ENCODE measurements at regions of chr4 and their contacts with region 1.

Region 1: GRCh38 chr4:157804986-157805385 is 367.8 kb downstream of the GASK1B start:
- DNase-seq: peak; percentile 23
- ATAC-seq: peak; percentile 64
- H3K4me3 ChIP-seq: no peak overlapping the region
- H3K27ac ChIP-seq: no peak overlapping the region
- H3K4me1 ChIP-seq: no peaks in the 10 kb centered on the region
- H3K27me3 ChIP-seq: no peaks in the 10 kb centered on the region
- CTCF ChIP-seq: peak; percentile 43

Region 2: DNA sequence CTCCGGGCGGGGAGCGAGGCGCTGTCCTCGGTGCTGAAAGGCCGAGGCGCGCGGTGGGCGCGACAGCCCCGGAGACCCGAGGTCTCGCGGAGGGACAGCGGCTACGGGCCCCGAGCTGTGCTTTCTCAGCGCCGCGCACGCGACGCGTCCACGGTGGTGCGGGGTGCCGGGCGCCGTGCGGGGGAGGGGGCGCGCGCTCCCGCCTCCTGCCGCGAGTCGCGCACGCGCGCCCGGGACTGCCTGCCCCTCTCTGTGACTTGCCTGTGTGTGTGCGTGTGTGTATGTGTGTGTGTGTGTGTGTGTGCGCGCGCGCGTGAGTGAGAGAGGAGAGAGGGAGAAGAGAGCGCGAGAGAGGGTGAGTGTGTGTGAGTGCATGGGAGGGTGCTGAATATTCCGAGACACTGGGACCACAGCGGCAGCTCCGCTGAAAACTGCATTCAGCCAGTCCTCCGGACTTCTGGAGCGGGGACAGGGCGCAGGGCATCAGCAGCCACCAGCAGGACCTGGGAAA is 584.6 kb before region 1 on chr4 and contains the start of gene GRIA2:
- CTCF ChIA-PET with region 1: no interaction called
- POLR2A ChIA-PET with region 1: no interaction called
- intact Hi-C with region 1: loop called (anchors 10 kb)
- DNase-seq: no peak
- ATAC-seq: no peak
- H3K4me3 ChIP-seq: no peak within 1 kb of the TSS
- H3K27ac ChIP-seq: no peak within 1 kb of the TSS
- H3K4me1 ChIP-seq: no peaks in the 10 kb centered on the region
- H3K27me3 ChIP-seq: peaks cover 10% of the 10 kb centered on the region; the same call in 1 of the 2 replicates
- CTCF ChIP-seq: no peak
- total RNA-seq, gene GRIA2: not detected in 2 replicates

Region 3: GRCh38 chr4:157372567-157372966 is 432.4 kb before region 1 on chr4:
- CTCF ChIA-PET with region 1: no interaction called
- POLR2A ChIA-PET with region 1: no interaction called
- intact Hi-C with region 1: loop called (anchors 10 kb)
- DNase-seq: no peak
- ATAC-seq: no peak
- H3K4me3 ChIP-seq: no peak overlapping the region
- H3K27ac ChIP-seq: no peak overlapping the region
- H3K4me1 ChIP-seq: no peaks in the 10 kb centered on the region
- H3K27me3 ChIP-seq: no peaks in the 10 kb centered on the region
- CTCF ChIP-seq: no peak

Region 4: GRCh38 chr4:157514711-157515110 is 290.3 kb before region 1 on chr4:
- CTCF ChIA-PET with region 1: no interaction called
- POLR2A ChIA-PET with region 1: no interaction called
- intact Hi-C with region 1: loop called (anchors 10 kb)
- DNase-seq: peak; percentile 2
- ATAC-seq: peak; percentile 50; the same call in 1 of the 2 replicates
- H3K4me3 ChIP-seq: no peak overlapping the region
- H3K27ac ChIP-seq: no peak overlapping the region
- H3K4me1 ChIP-seq: no peaks in the 10 kb centered on the region
- H3K27me3 ChIP-seq: no peaks in the 10 kb centered on the region
- CTCF ChIP-seq: no peak; the same call in none of the 2 replicates

Region 5: DNA sequence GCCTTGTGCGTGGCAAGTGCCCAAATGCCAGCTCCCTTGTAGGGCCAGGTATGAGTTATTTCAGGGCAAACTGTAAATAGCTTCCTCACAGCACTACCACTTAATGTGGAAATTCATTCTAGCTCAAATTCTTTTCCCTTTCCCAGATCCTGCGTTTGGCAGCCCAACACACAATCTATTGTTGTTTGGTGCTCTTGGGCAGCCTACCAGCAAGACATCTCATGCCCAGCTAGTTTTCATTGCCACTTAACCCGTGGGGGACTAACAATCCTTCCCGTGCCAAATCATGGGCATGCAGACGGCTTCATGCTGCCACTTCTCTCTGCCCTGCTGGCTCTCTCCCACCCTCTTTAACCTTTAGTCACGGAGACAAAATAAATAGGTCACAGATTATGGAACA is 130.3 kb before region 1 on chr4:
- CTCF ChIA-PET with region 1: no interaction called
- POLR2A ChIA-PET with region 1: no interaction called
- intact Hi-C with region 1: no loop called
- DNase-seq: no peak
- ATAC-seq: no peak
- H3K4me3 ChIP-seq: no peak overlapping the region
- H3K27ac ChIP-seq: no peak overlapping the region
- H3K4me1 ChIP-seq: no peaks in the 10 kb centered on the region
- H3K27me3 ChIP-seq: no peaks in the 10 kb centered on the region
- CTCF ChIP-seq: no peak

Region 6: DNA sequence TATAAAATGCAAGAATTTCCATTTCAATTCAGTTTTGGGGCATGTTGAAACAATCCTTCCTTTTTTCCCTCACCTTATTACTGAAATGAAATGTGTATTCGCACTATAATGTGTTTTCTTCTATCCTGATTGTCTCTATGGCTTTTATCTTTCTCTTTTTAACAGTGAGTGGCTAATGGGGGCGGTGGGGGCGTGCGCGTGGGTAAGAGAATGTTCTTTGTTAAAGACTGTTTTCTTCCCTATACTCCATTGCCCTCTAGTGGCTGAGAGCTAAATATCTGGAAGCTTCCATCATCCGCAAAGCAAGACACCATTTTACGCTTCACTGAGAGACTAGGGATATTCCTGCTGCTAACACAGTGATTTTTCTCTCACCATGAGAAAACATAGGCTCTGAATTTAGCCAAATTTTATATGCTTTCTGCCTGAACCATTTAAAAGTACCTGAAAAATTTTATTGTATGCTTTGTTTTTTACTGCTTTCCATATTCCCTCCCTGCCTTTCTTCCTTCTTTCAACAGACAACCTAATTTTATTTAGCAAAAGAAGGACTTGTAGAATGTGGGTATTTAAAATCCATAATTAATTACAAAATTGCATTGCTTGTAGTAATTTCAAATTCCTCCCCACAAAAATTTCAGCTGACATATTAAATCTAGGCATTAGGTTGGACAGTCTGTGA is 173.8 kb after region 1 on chr4:
- CTCF ChIA-PET with region 1: interaction called, 3 read pairs
- POLR2A ChIA-PET with region 1: no interaction called
- intact Hi-C with region 1: loop called (anchors 2 kb)
- DNase-seq: peak; percentile 60
- ATAC-seq: peak; percentile 64
- H3K4me3 ChIP-seq: peak overlapping the region; percentile 44; the same call in 1 of the 2 replicates
- H3K27ac ChIP-seq: no peak overlapping the region
- H3K4me1 ChIP-seq: no peaks in the 10 kb centered on the region
- H3K27me3 ChIP-seq: no peaks in the 10 kb centered on the region
- CTCF ChIP-seq: peak; percentile 79